ENCODE measurements at regions of chr1 and their contacts with region 1.

Region 1: GRCh38 chr1:236142253-236143103 is at the start of gene GPR137B:
- DNase-seq: peak; percentile 51
- H3K4me3 Mint-ChIP-seq: peak within 1 kb of the TSS; percentile 99
- H3K27ac Mint-ChIP-seq: peak within 1 kb of the TSS; percentile 81
- H3K4me1 Mint-ChIP-seq: peaks cover 16% of the 10 kb centered on the region
- H3K27me3 Mint-ChIP-seq: peaks cover 42% of the 10 kb centered on the region
- total RNA-seq, gene GPR137B: 6.8 and 7.8 TPM in 2 replicates

Region 2: DNA sequence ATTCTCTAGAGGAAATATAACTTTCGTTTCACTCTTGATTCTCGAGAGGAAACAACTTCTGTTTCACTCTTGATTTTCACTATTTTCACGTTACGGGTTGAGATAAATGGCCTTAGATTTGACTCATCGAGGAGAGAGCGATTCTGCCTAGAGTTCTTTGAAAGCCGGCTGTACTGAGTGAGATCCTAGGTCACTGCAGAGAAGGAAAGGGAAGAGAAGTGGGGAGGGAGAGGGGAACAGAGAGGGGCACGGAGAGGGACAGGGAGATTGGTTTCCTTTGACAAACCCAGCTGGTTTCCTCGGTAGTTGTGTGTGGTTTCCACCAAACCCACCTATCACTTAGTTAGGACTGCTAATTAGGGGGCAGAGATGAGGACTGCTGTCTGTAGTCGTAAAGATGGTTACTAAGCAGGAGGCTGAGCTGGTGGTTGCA is 21.7 kb before region 1 on chr1:
- intact Hi-C with region 1: loop called (anchors 2 kb)
- DNase-seq: no peak
- H3K4me3 Mint-ChIP-seq: peak overlapping the region; percentile 45
- H3K27ac Mint-ChIP-seq: peak overlapping the region; percentile 29
- H3K4me1 Mint-ChIP-seq: peaks cover 29% of the 10 kb centered on the region
- H3K27me3 Mint-ChIP-seq: peaks cover 19% of the 10 kb centered on the region

Measured in activated T-helper 2 cell treated with anti-CD3 and anti-CD28 coated beads, Interferon-gamma antibody, Interleukin-2, Interleukin-4, amounts not matched to agents 10 μg/mL and 5 μg/mL and 100 μg/mL, durations not matched to agents 14 hours and 24 hours and 36 hours (primary cell).